A673 (cell line): ENCODE measurements at regions of chr13 and their contacts with region 1.

Region 1: GRCh38 chr13:51125498-51126226 is 14.6 kb upstream of the C13orf42 start:
- DNase-seq: peak; percentile 80
- H3K4me3 ChIP-seq: no peak overlapping the region
- H3K27ac ChIP-seq: no peak overlapping the region
- H3K4me1 ChIP-seq: no peaks in the 10 kb centered on the region
- H3K27me3 ChIP-seq: no peaks in the 10 kb centered on the region
- CTCF ChIP-seq: peak; percentile 93

Region 2: DNA sequence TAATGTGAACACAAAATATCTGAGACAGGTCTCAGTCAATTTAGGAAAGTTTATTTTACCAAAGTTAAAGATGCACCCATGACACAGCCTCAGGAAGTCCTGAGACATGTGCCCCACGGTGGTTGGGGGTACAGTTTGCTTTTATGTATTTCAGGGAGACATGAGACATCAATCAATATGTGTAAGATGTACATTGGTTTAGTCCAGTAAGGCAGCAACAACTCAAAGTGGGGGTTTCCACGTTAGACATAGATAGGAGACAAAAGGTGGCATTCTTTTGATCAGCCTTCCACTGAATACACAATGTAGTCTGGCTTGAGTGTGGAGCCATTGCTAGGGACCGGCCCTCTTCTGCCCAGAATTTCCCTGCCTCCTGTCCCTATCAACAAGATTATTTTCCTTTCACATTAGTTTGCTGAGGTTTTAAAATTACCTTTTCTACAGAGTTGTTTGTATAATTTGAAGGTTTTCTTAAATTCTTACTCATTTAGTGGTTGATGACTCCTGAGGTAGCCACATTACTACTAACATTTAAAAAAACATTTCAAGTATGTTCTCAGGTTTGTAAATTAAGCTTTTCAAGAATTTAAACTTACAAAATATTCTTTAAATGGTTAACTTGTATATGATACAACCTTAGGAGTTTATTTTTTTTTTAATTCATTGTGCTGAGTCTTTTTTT is 182.9 kb before region 1 on chr13:
- CTCF ChIA-PET with region 1: no interaction called
- POLR2A ChIA-PET with region 1: no interaction called
- intact Hi-C with region 1: no loop called
- DNase-seq: no peak
- H3K4me3 ChIP-seq: no peak overlapping the region
- H3K27ac ChIP-seq: no peak overlapping the region
- H3K4me1 ChIP-seq: no peaks in the 10 kb centered on the region
- H3K27me3 ChIP-seq: no peaks in the 10 kb centered on the region
- CTCF ChIP-seq: no peak

Region 3: GRCh38 chr13:51070005-51070649 is 55.5 kb before region 1 on chr13:
- CTCF ChIA-PET with region 1: no interaction called
- POLR2A ChIA-PET with region 1: no interaction called
- intact Hi-C with region 1: no loop called
- DNase-seq: peak; percentile 85
- H3K4me3 ChIP-seq: no peak overlapping the region
- H3K27ac ChIP-seq: no peak overlapping the region
- H3K4me1 ChIP-seq: no peaks in the 10 kb centered on the region
- H3K27me3 ChIP-seq: no peaks in the 10 kb centered on the region
- CTCF ChIP-seq: peak; percentile 91

Region 4: GRCh38 chr13:51832471-51833152 is 707.0 kb after region 1 on chr13:
- CTCF ChIA-PET with region 1: interaction called, 3 read pairs
- POLR2A ChIA-PET with region 1: no interaction called
- intact Hi-C with region 1: loop called (anchors 2 kb)
- DNase-seq: peak; percentile 72
- H3K4me3 ChIP-seq: no peak overlapping the region
- H3K27ac ChIP-seq: no peak overlapping the region
- H3K4me1 ChIP-seq: no peaks in the 10 kb centered on the region
- H3K27me3 ChIP-seq: no peaks in the 10 kb centered on the region
- CTCF ChIP-seq: peak; percentile 60